Sciatic nerve (tissue), 2 donors: ENCODE measurements at regions of chr10 and their contacts with region 1.

Region 1: GRCh38 chr10:128000471-128001362 is 93.8 kb downstream of the PTPRE start:
- DNase-seq: no peak
- ATAC-seq: no peak

Region 2: GRCh38 chr10:127919418-127920271 is 81.1 kb before region 1 on chr10:
- intact Hi-C with region 1: loop called (anchors 5 kb)
- DNase-seq: no peak
- ATAC-seq: peak; percentile 25